ENCODE measurements at regions of chr16 and their contacts with region 1.

Region 1: GRCh38 chr16:57899771-57900661 is 70.9 kb downstream of the CNGB1 start:
- DNase-seq: peak; percentile 84
- ATAC-seq: peak; percentile 68

Region 2: GRCh38 chr16:57871456-57871855 is 28.6 kb before region 1 on chr16:
- intact Hi-C with region 1: no loop called
- DNase-seq: no peak
- ATAC-seq: no peak

Region 3: GRCh38 chr16:57938936-57939871 is 39.2 kb after region 1 on chr16:
- intact Hi-C with region 1: no loop called
- DNase-seq: peak; percentile 89
- ATAC-seq: peak; percentile 88

Region 4: GRCh38 chr16:58000706-58001676 is 101.0 kb after region 1 on chr16 and contains the start of gene USB1:
- intact Hi-C with region 1: loop called (anchors 1 kb)
- DNase-seq: peak; percentile 93
- ATAC-seq: peak; percentile 94
- total RNA-seq, gene USB1: 36.2 TPM

Region 5: DNA sequence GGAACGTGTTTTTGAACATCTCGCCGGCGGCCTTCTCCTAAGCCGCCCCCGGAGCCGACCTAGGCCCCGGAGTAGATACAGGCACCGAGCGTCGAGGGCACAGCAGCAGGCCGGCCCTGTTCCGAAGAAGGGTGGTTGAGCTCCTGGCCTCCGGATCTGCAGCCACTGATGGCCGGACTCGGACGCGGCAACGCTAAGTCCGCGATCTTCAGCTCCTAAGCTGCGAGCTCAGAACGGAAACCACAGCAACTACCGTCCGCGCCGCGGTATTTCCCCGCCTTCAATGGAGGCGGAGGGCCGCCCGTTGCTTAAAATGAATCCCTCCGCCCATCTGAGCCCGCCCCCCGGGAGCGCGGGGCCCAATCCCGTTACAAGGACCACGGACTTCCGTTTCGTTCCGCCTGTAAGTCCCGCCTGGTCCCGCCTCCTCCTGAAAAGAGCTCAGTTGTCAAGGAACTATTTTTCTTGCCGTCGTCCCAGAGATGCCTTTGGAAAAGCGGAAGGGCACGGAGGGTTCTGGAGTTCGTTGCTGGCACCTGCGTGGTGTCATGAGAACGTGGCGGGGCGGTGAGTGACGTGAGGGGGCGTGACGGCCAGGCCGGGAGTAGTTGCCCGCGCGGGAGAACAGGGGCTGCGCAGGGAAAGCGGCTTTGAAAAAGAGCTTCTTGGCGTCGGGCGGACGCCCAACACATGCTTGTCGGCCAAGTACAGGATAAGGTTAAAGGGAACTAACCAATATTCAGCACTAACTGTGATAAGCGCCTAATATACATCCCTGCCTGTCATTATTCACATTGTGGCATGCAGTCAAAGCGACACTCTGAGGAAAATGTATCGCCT is 229.3 kb after region 1 on chr16 and contains the start of gene CFAP20:
- intact Hi-C with region 1: loop called (anchors 5 kb)
- DNase-seq: peak; percentile 99
- ATAC-seq: peak; percentile 97
- total RNA-seq, gene CFAP20: 34.8 TPM